Lower leg skin (tissue), 4 donors: ENCODE measurements at regions of chr7 and their contacts with region 1.

Region 1: GRCh38 chr7:20188567-20188966 is 28.6 kb downstream of the MACC1 start:
- DNase-seq: no peak
- H3K4me3 ChIP-seq: no peak overlapping the region
- CTCF ChIP-seq: no peak
- POLR2A ChIP-seq: no peak

Region 2: DNA sequence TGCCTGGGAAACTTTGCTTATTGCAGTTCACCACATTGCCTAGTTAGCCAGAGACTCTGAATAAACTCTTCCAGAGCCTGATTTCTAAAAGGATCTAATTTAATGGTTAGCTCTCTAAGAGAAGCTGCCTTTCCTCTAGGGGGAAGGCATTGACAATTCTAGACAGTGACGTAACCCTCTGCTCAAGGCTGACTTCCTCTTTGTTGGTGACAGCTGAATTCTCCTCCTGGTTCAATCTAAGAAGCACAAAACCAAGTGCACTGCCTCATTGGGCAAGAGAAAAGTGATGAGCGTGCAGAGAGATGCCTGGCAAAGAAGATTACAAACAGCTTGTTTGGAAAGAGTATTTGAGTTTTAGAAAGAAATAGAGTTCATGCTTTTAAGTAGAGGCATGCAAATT is 74.1 kb before region 1 on chr7:
- intact Hi-C with region 1: no loop called
- DNase-seq: no peak
- H3K4me3 ChIP-seq: no peak overlapping the region
- CTCF ChIP-seq: no peak
- POLR2A ChIP-seq: no peak

Region 3: GRCh38 chr7:20172736-20173334 is 15.7 kb before region 1 on chr7:
- intact Hi-C with region 1: loop called (anchors 2 kb)
- DNase-seq: peak; percentile 32 to 85
- H3K4me3 ChIP-seq: no peak overlapping the region
- CTCF ChIP-seq: no peak
- POLR2A ChIP-seq: no peak

Region 4: DNA sequence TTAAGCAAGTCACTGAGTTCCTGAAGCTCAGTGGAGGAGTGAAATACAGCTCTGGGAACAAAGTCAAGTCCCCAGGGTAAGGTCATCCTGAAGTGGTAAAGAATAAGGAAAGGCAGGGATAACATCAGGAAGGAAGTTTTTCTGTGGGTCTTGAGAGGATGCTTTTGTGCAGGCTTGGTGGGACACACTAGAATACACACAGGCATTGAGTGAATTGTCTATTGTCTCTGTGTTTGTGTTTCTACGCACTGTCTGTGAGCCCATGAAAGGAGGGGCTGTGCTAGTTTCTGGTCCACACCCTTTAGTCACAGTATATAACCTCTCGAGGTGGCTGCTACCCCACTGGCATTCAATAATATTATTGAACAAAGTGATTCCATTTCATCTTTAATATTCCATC is 331.1 kb after region 1 on chr7:
- intact Hi-C with region 1: no loop called
- DNase-seq: no peak
- H3K4me3 ChIP-seq: no peak overlapping the region
- CTCF ChIP-seq: no peak
- POLR2A ChIP-seq: no peak